Motor neuron (in vitro differentiated cells): ENCODE measurements at regions of chr10 and their contacts with region 1.

Region 1: GRCh38 chr10:37710831-37711616 is 146.4 kb downstream of the ZNF248 start:
- ATAC-seq: peak in 2 of 8 experiments; percentile 26 to 59
- H3K4me3 ChIP-seq: no peak overlapping the region
- H3K27ac ChIP-seq: no peak overlapping the region
- H3K4me1 ChIP-seq: no peaks in the 10 kb centered on the region

Region 2: GRCh38 chr10:37803269-37803668 is 92.2 kb after region 1 on chr10:
- in situ Hi-C with region 1: loop called in 1 of 9 experiments (anchors 25 kb)
- ATAC-seq: peak in 1 of 8 experiments; percentile 20
- H3K4me3 ChIP-seq: no peak overlapping the region
- H3K27ac ChIP-seq: no peak overlapping the region
- H3K4me1 ChIP-seq: no peaks in the 10 kb centered on the region